ENCODE measurements at regions of chr11 and their contacts with region 1.

Region 1: DNA sequence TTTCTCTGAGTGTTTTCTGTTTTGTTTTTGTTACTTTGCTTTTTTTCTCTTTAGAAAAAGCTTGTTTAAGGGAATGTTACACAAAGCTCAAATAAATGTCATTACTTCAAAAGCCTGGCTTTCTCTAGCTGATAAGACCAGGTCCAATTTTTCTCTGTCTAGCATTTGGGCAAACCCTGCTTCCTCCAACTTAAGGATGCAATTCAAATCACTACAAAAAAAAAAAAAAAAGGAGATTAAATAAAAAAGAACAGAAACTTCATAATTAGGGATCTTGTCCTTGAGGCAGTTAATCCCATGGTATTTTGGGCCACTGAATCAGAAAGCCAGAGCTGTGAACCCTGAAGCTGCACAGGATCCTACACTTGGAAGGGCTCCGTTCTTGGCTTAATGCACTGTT is 480.8 kb upstream of the KIRREL3 start:
- DNase-seq: no peak
- H3K4me3 ChIP-seq: no peak overlapping the region
- H3K27ac ChIP-seq: no peak overlapping the region
- H3K4me1 ChIP-seq: no peaks in the 10 kb centered on the region
- H3K27me3 ChIP-seq: no peaks in the 10 kb centered on the region
- CTCF ChIP-seq: no peak

Region 2: DNA sequence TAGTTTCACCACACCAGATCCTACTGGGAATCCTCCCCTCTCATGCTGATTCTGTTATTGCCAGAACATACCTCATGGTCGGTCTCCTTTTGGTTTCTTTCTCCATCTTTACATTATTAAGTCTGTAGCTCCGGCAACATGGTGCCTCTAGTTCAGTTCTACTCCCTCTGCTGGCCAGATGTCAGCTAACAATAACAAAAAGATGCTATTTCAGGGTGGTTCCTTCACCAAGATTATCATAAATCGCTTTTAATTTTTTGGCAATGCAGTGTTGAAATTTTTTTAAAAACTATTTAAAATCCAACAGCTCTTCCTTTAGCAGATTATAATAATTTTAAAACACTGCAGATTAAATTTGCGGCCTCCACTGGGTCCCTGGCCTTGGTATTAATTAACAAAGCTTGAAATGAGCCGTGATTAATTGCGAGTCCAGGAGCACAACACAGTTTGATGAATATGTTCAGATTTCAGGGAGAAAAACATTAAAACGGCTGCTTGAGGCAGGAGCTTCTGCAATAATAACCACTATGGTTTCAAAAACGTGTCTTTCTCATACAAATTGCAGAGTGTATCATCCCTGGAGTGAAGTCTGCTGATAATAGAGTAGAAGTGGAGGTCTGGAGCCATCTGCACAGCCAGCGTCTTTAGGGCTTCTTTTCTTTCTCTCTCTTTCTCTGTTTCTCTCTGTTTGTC is 12.1 kb after region 1 on chr11:
- CTCF ChIA-PET with region 1: interaction called, 11 read pairs
- POLR2A ChIA-PET with region 1: no interaction called
- intact Hi-C with region 1: no loop called
- DNase-seq: peak; percentile 40
- H3K4me3 ChIP-seq: no peak overlapping the region
- H3K27ac ChIP-seq: no peak overlapping the region
- H3K4me1 ChIP-seq: no peaks in the 10 kb centered on the region
- H3K27me3 ChIP-seq: peaks cover 11% of the 10 kb centered on the region
- CTCF ChIP-seq: peak; percentile 69

Region 3: GRCh38 chr11:127574478-127574877 is 93.1 kb after region 1 on chr11:
- CTCF ChIA-PET with region 1: no interaction called
- POLR2A ChIA-PET with region 1: no interaction called
- intact Hi-C with region 1: no loop called
- DNase-seq: no peak
- H3K4me3 ChIP-seq: no peak overlapping the region
- H3K27ac ChIP-seq: no peak overlapping the region
- H3K4me1 ChIP-seq: no peaks in the 10 kb centered on the region
- H3K27me3 ChIP-seq: peaks cover 6% of the 10 kb centered on the region
- CTCF ChIP-seq: no peak

Region 4: DNA sequence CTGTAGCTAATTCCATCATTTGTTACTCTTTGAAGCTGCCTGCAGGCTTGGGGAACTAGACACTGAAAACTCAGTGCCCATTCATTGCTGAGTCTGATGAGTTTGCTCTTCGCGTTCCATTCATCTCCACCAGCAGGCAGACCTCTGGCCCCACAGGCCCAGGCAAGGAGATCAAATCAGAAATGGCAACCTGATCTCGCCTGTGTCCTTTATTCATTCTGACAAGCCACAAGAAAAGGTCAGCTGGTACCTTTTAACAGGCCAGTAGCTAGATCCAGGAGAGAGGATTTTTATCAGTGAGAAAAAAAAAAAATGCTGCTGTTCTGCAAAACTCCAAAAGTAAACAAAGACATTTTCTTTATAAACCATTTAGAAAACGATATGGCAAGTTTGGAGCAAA is 363.5 kb after region 1 on chr11:
- CTCF ChIA-PET with region 1: no interaction called
- POLR2A ChIA-PET with region 1: no interaction called
- intact Hi-C with region 1: no loop called
- DNase-seq: no peak
- H3K4me3 ChIP-seq: no peak overlapping the region
- H3K27ac ChIP-seq: no peak overlapping the region
- H3K4me1 ChIP-seq: no peaks in the 10 kb centered on the region
- H3K27me3 ChIP-seq: peaks cover 38% of the 10 kb centered on the region
- CTCF ChIP-seq: no peak

Measured in A673 (cell line).